IMR-90 (cell line): ENCODE measurements at regions of chr15 and their contacts with region 1.

Region 1: GRCh38 chr15:71575474-71576045 is 234.8 kb upstream of the NR2E3 start:
- DNase-seq: no peak
- ATAC-seq: peak; percentile 66
- H3K4me3 ChIP-seq: no peak overlapping the region
- H3K27ac ChIP-seq: no peak overlapping the region
- H3K4me1 ChIP-seq: no peaks in the 10 kb centered on the region
- H3K27me3 ChIP-seq: no peaks in the 10 kb centered on the region
- CTCF ChIP-seq: peak; percentile 56
- POLR2A ChIP-seq: no peak
- RAD21 ChIP-seq: peak; percentile 50

Region 2: DNA sequence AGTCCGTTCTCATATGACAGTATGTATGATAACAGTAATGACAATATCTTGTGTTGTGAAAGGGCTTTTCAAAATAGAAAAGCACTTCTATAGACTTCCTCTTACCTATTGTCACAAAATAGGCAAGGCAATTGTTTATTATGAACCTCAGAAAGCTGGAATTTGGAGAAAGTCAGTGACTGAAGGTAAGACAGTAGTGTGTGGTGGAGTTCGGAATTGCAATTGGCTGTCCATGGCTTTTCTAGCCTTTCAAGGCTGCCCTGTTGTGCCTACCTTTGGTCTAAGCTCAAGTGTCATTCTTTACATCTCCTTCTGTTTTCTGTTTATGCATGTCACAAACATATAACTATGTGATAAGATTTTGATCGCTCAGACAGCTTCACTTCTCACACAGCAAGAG is 15.5 kb after region 1 on chr15:
- CTCF ChIA-PET with region 1: interaction called, 15 read pairs
- POLR2A ChIA-PET with region 1: no interaction called
- dilution Hi-C with region 1: no loop called
- in situ Hi-C with region 1: no loop called
- intact Hi-C with region 1: no loop called
- DNase-seq: no peak
- ATAC-seq: no peak
- H3K4me3 ChIP-seq: no peak overlapping the region
- H3K27ac ChIP-seq: no peak overlapping the region
- H3K4me1 ChIP-seq: peaks cover 5% of the 10 kb centered on the region
- H3K27me3 ChIP-seq: no peaks in the 10 kb centered on the region
- CTCF ChIP-seq: no peak
- POLR2A ChIP-seq: no peak
- RAD21 ChIP-seq: no peak

Region 3: GRCh38 chr15:71611551-71612396 is 36.2 kb after region 1 on chr15:
- CTCF ChIA-PET with region 1: no interaction called
- POLR2A ChIA-PET with region 1: no interaction called
- dilution Hi-C with region 1: no loop called
- in situ Hi-C with region 1: no loop called
- intact Hi-C with region 1: no loop called
- DNase-seq: peak; percentile 31
- ATAC-seq: no peak
- H3K4me3 ChIP-seq: no peak overlapping the region
- H3K27ac ChIP-seq: no peak overlapping the region
- H3K4me1 ChIP-seq: no peaks in the 10 kb centered on the region
- H3K27me3 ChIP-seq: no peaks in the 10 kb centered on the region
- CTCF ChIP-seq: no peak
- POLR2A ChIP-seq: no peak
- RAD21 ChIP-seq: no peak

Region 4: DNA sequence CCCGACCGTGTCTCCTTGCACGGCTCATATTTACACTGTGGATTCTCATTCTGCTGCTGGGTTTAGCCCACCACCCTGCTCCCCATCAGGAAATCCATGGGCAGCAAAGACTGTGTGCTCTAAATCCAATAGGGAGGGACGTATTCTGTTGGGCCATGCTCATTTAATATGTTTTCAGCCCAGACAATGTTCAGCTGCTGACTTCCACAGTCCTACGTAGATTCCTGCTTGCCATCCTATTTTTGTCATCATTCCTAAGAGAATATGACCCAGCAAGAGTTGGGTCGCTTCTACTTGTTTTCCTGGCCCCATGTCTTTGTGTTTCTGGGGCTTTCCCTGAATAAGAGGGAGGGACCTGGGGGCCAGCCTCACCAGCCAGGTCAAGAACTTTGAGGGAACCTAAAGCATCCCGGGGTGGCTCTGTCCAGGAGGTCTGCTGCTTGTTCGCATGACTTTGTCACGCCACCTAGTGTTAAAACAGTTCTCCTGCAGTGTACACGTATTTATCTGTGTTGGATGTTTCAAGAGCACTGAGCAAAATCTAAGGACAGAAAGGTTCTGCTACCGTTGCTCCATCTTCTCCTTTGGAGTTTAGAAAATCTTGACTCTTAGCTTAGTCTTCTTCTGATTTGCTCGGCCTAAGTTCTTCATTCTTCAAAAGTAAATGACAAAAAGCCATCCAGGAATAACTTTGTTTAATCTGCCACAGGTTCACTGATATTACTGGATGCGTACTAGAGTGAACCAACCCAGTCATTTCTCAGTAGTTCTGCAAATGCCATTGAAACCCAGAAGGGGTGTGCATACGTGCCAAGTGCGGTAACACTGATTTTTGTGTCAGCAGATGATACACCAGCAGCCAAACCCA is 155.0 kb after region 1 on chr15:
- CTCF ChIA-PET with region 1: interaction called, 4 read pairs
- POLR2A ChIA-PET with region 1: no interaction called
- dilution Hi-C with region 1: no loop called
- in situ Hi-C with region 1: no loop called
- intact Hi-C with region 1: loop called (anchors 2 kb)
- DNase-seq: peak; percentile 77
- ATAC-seq: peak; percentile 96
- H3K4me3 ChIP-seq: no peak overlapping the region
- H3K27ac ChIP-seq: no peak overlapping the region
- H3K4me1 ChIP-seq: peaks cover 3% of the 10 kb centered on the region
- H3K27me3 ChIP-seq: no peaks in the 10 kb centered on the region; the same call in 1 of the 2 replicates
- CTCF ChIP-seq: peak; percentile 75
- POLR2A ChIP-seq: no peak
- RAD21 ChIP-seq: peak; percentile 82